GM12878 (cell line): ENCODE measurements at regions of chr1 and their contacts with region 1.

Region 1: DNA sequence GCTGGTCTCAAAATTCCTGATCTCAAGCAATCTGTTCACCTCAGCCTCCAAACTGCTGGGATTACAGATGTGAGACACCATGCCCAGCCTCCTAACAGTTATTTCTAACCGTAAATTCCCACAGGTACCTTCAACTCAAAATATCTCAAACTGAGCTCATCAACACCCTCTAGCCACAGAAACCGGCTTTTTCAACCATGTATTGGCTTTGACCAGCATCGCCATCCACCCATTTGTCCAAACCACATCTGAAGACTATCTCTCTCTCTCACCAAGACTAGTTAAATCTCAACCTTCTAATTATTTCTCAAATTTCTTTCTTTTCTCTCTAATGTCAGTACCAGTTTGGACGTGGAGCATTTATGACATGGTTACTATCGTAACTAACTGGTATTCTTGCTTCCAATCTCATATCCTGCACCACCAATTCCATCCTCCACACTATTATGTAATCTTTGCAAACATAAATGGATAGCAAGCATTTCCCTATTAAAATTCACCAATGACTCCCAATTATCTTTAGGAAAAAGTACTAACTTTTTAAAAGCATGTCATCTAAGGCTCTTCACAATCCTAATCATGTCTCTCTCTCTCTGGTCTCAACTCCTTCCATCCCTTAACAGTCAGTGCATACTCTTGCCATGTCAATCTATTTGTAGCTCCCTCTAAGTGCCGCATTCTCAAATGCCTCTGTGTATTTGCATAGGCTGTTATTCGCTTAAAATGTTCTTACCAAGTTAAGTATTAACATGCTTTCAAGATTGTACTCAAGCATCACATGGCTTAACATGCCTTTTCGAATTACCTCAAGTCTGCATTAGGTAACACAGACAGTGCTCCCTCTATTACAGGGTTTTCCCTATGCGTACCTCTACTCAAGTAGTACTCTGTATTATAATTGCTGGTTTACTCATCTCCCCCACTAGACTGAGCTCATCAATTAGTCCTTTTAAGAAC is 18.1 kb downstream of the RSBN1 start:
- DNase-seq: no peak
- ATAC-seq: peak; percentile 84
- H3K4me3 ChIP-seq: no peak overlapping the region
- H3K27ac ChIP-seq: no peak overlapping the region
- H3K4me1 ChIP-seq: peaks cover 10% of the 10 kb centered on the region
- H3K27me3 ChIP-seq: no peaks in the 10 kb centered on the region
- CTCF ChIP-seq: no peak
- EP300 ChIP-seq: 0 out of 4 replicates have a peak, but pooled peaks of 1 of the 2 experiments have one; percentile 23
- POLR2A ChIP-seq: no peak
- RAD21 ChIP-seq: no peak

Region 2: GRCh38 chr1:113783254-113784099 is 10.7 kb before region 1 on chr1:
- CTCF ChIA-PET with region 1: interaction called, 23 read pairs
- POLR2A ChIA-PET with region 1: interaction called, 40 read pairs
- RAD21 ChIA-PET with region 1: interaction called, 51 read pairs
- SMC1A ChIA-PET with region 1: interaction called, 134 read pairs
- in situ Hi-C with region 1: no loop called
- intact Hi-C with region 1: no loop called
- DNase-seq: peak; percentile 55
- ATAC-seq: peak; percentile 92
- H3K4me3 ChIP-seq: peak overlapping the region; percentile 19; the same call in 1 of the 2 replicates
- H3K27ac ChIP-seq: peak overlapping the region; percentile 51
- H3K4me1 ChIP-seq: peaks cover 36% of the 10 kb centered on the region
- H3K27me3 ChIP-seq: no peaks in the 10 kb centered on the region
- CTCF ChIP-seq: no peak
- EP300 ChIP-seq: 0 out of 4 replicates have a peak, but pooled peaks of 1 of the 2 experiments have one; percentile 4
- POLR2A ChIP-seq: no peak
- RAD21 ChIP-seq: no peak

Region 3: GRCh38 chr1:113804421-113805255 is 10.5 kb after region 1 on chr1:
- CTCF ChIA-PET with region 1: interaction called, 6 read pairs
- POLR2A ChIA-PET with region 1: interaction called, 9 read pairs
- RAD21 ChIA-PET with region 1: interaction called, 8 read pairs
- SMC1A ChIA-PET with region 1: interaction called, 134 read pairs
- in situ Hi-C with region 1: no loop called
- intact Hi-C with region 1: no loop called
- DNase-seq: no peak
- ATAC-seq: peak; percentile 35
- H3K4me3 ChIP-seq: 0 out of 2 replicates have a peak overlapping the region, but pooled peaks have one; percentile 25
- H3K27ac ChIP-seq: no peak overlapping the region
- H3K4me1 ChIP-seq: peaks cover 14% of the 10 kb centered on the region
- H3K27me3 ChIP-seq: no peaks in the 10 kb centered on the region
- CTCF ChIP-seq: no peak
- EP300 ChIP-seq: no peak
- POLR2A ChIP-seq: no peak
- RAD21 ChIP-seq: no peak

Region 4: DNA sequence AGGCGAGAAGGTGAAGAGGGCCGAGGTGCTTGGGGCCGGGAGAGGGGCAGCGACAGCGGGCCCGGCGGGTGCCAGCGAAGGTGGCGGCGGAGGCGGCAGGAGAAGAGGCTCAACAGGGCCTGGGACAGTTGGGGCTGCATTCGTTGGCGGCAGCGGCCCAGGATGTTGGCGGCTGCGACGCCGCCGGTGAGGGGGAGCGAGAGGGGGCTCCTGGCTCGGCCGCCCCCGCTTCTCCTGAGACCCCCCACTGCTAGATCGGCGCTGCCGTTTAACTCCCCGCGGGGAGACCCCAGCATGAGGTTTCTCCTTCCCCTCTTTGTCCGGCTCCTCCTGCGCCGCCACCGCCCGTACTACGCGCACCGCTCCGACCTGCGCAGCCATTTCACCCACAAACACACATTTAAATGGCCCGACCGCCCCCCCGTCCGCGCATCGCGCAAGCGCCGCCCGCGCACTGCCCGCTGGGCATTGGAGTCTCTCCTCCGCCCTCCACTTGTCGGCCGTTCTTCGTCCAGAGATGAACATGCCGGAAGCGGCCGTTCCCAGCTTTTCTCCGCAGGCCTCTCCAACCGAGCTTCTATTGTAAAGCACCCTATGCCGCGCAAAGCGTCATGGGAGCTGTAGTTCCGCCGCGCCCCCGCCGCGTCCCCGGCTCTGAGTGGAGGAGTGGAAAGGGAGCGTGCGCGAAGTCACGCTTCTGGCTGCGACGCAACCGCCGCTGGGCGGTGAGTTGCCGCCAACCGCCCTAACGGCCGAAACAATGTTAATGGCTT is 17.9 kb after region 1 on chr1 and contains the start of gene RSBN1:
- CTCF ChIA-PET with region 1: interaction called, 4 read pairs
- POLR2A ChIA-PET with region 1: interaction called, 16 read pairs
- RAD21 ChIA-PET with region 1: interaction called, 14 read pairs
- SMC1A ChIA-PET with region 1: interaction called, 30 read pairs
- in situ Hi-C with region 1: no loop called
- intact Hi-C with region 1: no loop called
- DNase-seq: peak; percentile 96
- ATAC-seq: peak; percentile 92
- H3K4me3 ChIP-seq: peak within 1 kb of the TSS; percentile 92
- H3K27ac ChIP-seq: peak within 1 kb of the TSS; percentile 72
- H3K4me1 ChIP-seq: no peaks in the 10 kb centered on the region
- H3K27me3 ChIP-seq: no peaks in the 10 kb centered on the region
- CTCF ChIP-seq: no peak
- EP300 ChIP-seq: peak in 1 of 2 experiments; percentile 80; a peak in 2 of 4 replicates
- POLR2A ChIP-seq: peak; percentile 96
- RAD21 ChIP-seq: no peak
- polyA plus RNA-seq, gene RSBN1: 2.9 to 10.5 TPM

Region 5: GRCh38 chr1:113826162-113826561 is 32.0 kb after region 1 on chr1:
- CTCF ChIA-PET with region 1: no interaction called
- POLR2A ChIA-PET with region 1: no interaction called
- RAD21 ChIA-PET with region 1: no interaction called
- SMC1A ChIA-PET with region 1: no interaction called
- in situ Hi-C with region 1: no loop called
- intact Hi-C with region 1: no loop called
- DNase-seq: no peak
- ATAC-seq: no peak
- H3K4me3 ChIP-seq: no peak overlapping the region
- H3K27ac ChIP-seq: no peak overlapping the region
- H3K4me1 ChIP-seq: no peaks in the 10 kb centered on the region
- H3K27me3 ChIP-seq: no peaks in the 10 kb centered on the region
- CTCF ChIP-seq: no peak
- EP300 ChIP-seq: no peak
- POLR2A ChIP-seq: no peak
- RAD21 ChIP-seq: no peak

Region 6: GRCh38 chr1:113918241-113918640 is 124.1 kb after region 1 on chr1:
- CTCF ChIA-PET with region 1: no interaction called
- POLR2A ChIA-PET with region 1: no interaction called
- RAD21 ChIA-PET with region 1: no interaction called
- SMC1A ChIA-PET with region 1: no interaction called
- in situ Hi-C with region 1: no loop called
- intact Hi-C with region 1: no loop called
- DNase-seq: no peak
- ATAC-seq: no peak
- H3K4me3 ChIP-seq: no peak overlapping the region
- H3K27ac ChIP-seq: no peak overlapping the region
- H3K4me1 ChIP-seq: no peaks in the 10 kb centered on the region
- H3K27me3 ChIP-seq: no peaks in the 10 kb centered on the region
- CTCF ChIP-seq: no peak
- EP300 ChIP-seq: no peak
- POLR2A ChIP-seq: no peak
- RAD21 ChIP-seq: no peak

Region 7: GRCh38 chr1:113963281-113963906 is 169.2 kb after region 1 on chr1:
- CTCF ChIA-PET with region 1: no interaction called
- POLR2A ChIA-PET with region 1: no interaction called
- RAD21 ChIA-PET with region 1: no interaction called
- SMC1A ChIA-PET with region 1: no interaction called
- in situ Hi-C with region 1: no loop called
- intact Hi-C with region 1: no loop called
- DNase-seq: no peak
- ATAC-seq: no peak
- H3K4me3 ChIP-seq: no peak overlapping the region
- H3K27ac ChIP-seq: no peak overlapping the region
- H3K4me1 ChIP-seq: no peaks in the 10 kb centered on the region
- H3K27me3 ChIP-seq: no peaks in the 10 kb centered on the region
- CTCF ChIP-seq: peak in 1 of 3 experiments; percentile 31; a peak in 2 of 6 replicates
- EP300 ChIP-seq: no peak
- POLR2A ChIP-seq: no peak
- RAD21 ChIP-seq: peak; percentile 36; the same call in 1 of the 2 replicates

Region 8: GRCh38 chr1:114737314-114737849 is 943.2 kb after region 1 on chr1:
- CTCF ChIA-PET with region 1: no interaction called
- POLR2A ChIA-PET with region 1: no interaction called
- RAD21 ChIA-PET with region 1: no interaction called
- SMC1A ChIA-PET with region 1: no interaction called
- in situ Hi-C with region 1: no loop called
- intact Hi-C with region 1: no loop called
- DNase-seq: no peak
- ATAC-seq: no peak
- H3K4me3 ChIP-seq: no peak overlapping the region
- H3K27ac ChIP-seq: no peak overlapping the region
- H3K4me1 ChIP-seq: no peaks in the 10 kb centered on the region
- H3K27me3 ChIP-seq: no peaks in the 10 kb centered on the region
- CTCF ChIP-seq: no peak
- EP300 ChIP-seq: no peak
- POLR2A ChIP-seq: no peak
- RAD21 ChIP-seq: no peak